T-cell (primary cell): ENCODE measurements at regions of chr1 and their contacts with region 1.

Region 1: GRCh38 chr1:89578151-89578550 is 53.5 kb downstream of the LRRC8B start:
- DNase-seq: no peak
- ATAC-seq: no peak
- H3K4me3 ChIP-seq: no peak overlapping the region
- H3K4me3 Mint-ChIP-seq: no peak overlapping the region
- H3K27ac ChIP-seq: no peak overlapping the region
- H3K27ac Mint-ChIP-seq: no peak overlapping the region
- H3K4me1 ChIP-seq: no peaks in the 10 kb centered on the region
- H3K4me1 Mint-ChIP-seq: peaks cover 11 to 18% (median 11%) of the 10 kb centered on the region in 3 donors
- H3K27me3 ChIP-seq: no peaks in the 10 kb centered on the region
- H3K27me3 Mint-ChIP-seq: no peaks in the 10 kb centered on the region

Region 2: DNA sequence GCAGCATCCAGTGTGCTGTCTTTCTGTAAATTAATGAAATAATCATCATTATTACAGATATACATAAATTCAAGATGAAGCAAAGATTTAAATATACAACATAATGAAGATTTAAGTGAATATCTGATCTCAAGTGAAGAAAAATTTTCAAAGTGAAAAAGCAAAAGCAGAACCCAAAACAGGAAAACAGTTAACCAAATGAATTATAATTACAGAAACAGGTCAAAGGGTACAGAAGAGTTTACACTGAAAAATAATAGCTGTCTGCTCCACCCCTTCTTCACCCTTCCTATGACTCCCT is 642.0 kb before region 1 on chr1:
- CTCF ChIA-PET with region 1: interaction called in 1 of 2 experiments, 10 read pairs
- POLR2A ChIA-PET with region 1: no interaction called
- DNase-seq: no peak
- ATAC-seq: no peak
- H3K4me3 ChIP-seq: no peak overlapping the region
- H3K4me3 Mint-ChIP-seq: no peak overlapping the region
- H3K27ac ChIP-seq: no peak overlapping the region
- H3K27ac Mint-ChIP-seq: peak overlapping the region; percentile 46
- H3K4me1 ChIP-seq: no peaks in the 10 kb centered on the region
- H3K4me1 Mint-ChIP-seq: peaks cover 0 to 6% (median 5%) of the 10 kb centered on the region in 3 donors
- H3K27me3 ChIP-seq: no peaks in the 10 kb centered on the region
- H3K27me3 Mint-ChIP-seq: no peaks in the 10 kb centered on the region

Region 3: GRCh38 chr1:88998716-88999115 is 579.4 kb before region 1 on chr1:
- CTCF ChIA-PET with region 1: no interaction called
- POLR2A ChIA-PET with region 1: interaction called in 1 of 2 experiments, 10 read pairs
- DNase-seq: peak in 3 of 35 experiments; percentile 26 to 86 (median 36)
- ATAC-seq: peak; percentile 75 to 87 (median 81)
- H3K4me3 ChIP-seq: no peak overlapping the region
- H3K4me3 Mint-ChIP-seq: no peak overlapping the region
- H3K27ac ChIP-seq: no peak overlapping the region
- H3K27ac Mint-ChIP-seq: no peak overlapping the region
- H3K4me1 ChIP-seq: peaks cover under 1 to 19% of the 10 kb centered on the region in 2 experiments
- H3K4me1 Mint-ChIP-seq: peaks cover 34 to 39% (median 38%) of the 10 kb centered on the region in 3 donors
- H3K27me3 ChIP-seq: no peaks in the 10 kb centered on the region
- H3K27me3 Mint-ChIP-seq: no peaks in the 10 kb centered on the region

Region 4: GRCh38 chr1:89261926-89262515 is 316.1 kb before region 1 on chr1:
- CTCF ChIA-PET with region 1: no interaction called
- POLR2A ChIA-PET with region 1: no interaction called
- DNase-seq: no peak
- ATAC-seq: no peak
- H3K4me3 ChIP-seq: no peak overlapping the region
- H3K4me3 Mint-ChIP-seq: peak overlapping the region in 2 of 3 donors; percentile 51 to 71
- H3K27ac ChIP-seq: peak overlapping the region; percentile 28
- H3K27ac Mint-ChIP-seq: peak overlapping the region; percentile 85 to 90
- H3K4me1 ChIP-seq: peaks cover 17 to 35% of the 10 kb centered on the region in 2 experiments
- H3K4me1 Mint-ChIP-seq: peaks cover 61 to 79% (median 78%) of the 10 kb centered on the region in 3 donors
- H3K27me3 ChIP-seq: no peaks in the 10 kb centered on the region
- H3K27me3 Mint-ChIP-seq: no peaks in the 10 kb centered on the region

Region 5: GRCh38 chr1:89516055-89516454 is 62.1 kb before region 1 on chr1:
- CTCF ChIA-PET with region 1: interaction called in 1 of 2 experiments, 21 read pairs
- POLR2A ChIA-PET with region 1: interaction called in 1 of 2 experiments, 3 read pairs
- DNase-seq: no peak
- ATAC-seq: no peak
- H3K4me3 ChIP-seq: no peak overlapping the region
- H3K4me3 Mint-ChIP-seq: no peak overlapping the region
- H3K27ac ChIP-seq: no peak overlapping the region
- H3K27ac Mint-ChIP-seq: no peak overlapping the region
- H3K4me1 ChIP-seq: no peaks in the 10 kb centered on the region
- H3K4me1 Mint-ChIP-seq: peaks cover 0 to 2% (median 0%) of the 10 kb centered on the region in 3 donors
- H3K27me3 ChIP-seq: no peaks in the 10 kb centered on the region
- H3K27me3 Mint-ChIP-seq: peaks cover 0 to 5% of the 10 kb centered on the region in 2 donors

Region 6: GRCh38 chr1:89530444-89531089 is 47.6 kb before region 1 on chr1:
- CTCF ChIA-PET with region 1: no interaction called
- POLR2A ChIA-PET with region 1: no interaction called
- DNase-seq: no peak
- ATAC-seq: no peak
- H3K4me3 ChIP-seq: no peak overlapping the region
- H3K4me3 Mint-ChIP-seq: no peak overlapping the region
- H3K27ac ChIP-seq: no peak overlapping the region
- H3K27ac Mint-ChIP-seq: no peak overlapping the region
- H3K4me1 ChIP-seq: peaks cover 13 to 21% of the 10 kb centered on the region in 2 experiments
- H3K4me1 Mint-ChIP-seq: peaks cover 43 to 58% (median 54%) of the 10 kb centered on the region in 3 donors
- H3K27me3 ChIP-seq: no peaks in the 10 kb centered on the region
- H3K27me3 Mint-ChIP-seq: no peaks in the 10 kb centered on the region

Region 7: DNA sequence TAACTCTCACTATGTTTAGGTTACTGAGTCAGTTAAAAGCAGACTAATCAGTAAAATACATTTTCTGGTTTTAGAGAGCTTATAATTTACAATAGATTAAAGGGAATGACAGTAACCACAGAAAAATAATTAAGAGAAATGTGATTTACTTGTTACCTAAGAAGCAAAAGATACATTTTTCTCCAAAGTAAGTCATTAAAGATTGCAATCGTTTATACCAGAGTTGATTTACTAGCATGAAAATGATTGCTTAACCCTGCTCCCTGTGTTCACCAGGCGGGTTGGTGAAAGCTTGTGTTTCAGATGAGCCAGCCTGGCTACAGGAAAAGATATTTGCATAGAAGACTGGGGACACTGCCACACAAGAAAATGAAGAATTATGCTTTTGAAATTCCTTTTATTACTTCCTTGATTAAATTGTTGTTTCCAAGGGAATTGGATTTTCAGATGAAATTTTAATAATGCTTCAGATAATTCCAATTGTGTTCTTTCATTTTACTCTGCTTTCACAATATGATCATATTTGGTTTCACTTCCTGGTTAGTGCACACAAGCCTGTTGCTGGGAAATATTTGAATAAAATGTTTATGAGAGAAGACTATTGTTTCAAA is 25.6 kb before region 1 on chr1:
- CTCF ChIA-PET with region 1: interaction called in 1 of 2 experiments, 4 read pairs
- POLR2A ChIA-PET with region 1: interaction called in 1 of 2 experiments, 15 read pairs
- DNase-seq: peak in 2 of 35 experiments; percentile 2 to 22
- ATAC-seq: peak in 1 of 4 experiments; percentile 61
- H3K4me3 ChIP-seq: peak overlapping the region in 1 of 2 donors; percentile 18
- H3K4me3 Mint-ChIP-seq: peak overlapping the region; percentile 17 to 47 (median 34)
- H3K27ac ChIP-seq: peak overlapping the region; percentile 2
- H3K27ac Mint-ChIP-seq: peak overlapping the region in 1 of 2 donors; percentile 69
- H3K4me1 ChIP-seq: peaks cover 3 to 13% of the 10 kb centered on the region in 2 experiments
- H3K4me1 Mint-ChIP-seq: peaks cover 54 to 72% (median 64%) of the 10 kb centered on the region in 3 donors
- H3K27me3 ChIP-seq: no peaks in the 10 kb centered on the region
- H3K27me3 Mint-ChIP-seq: no peaks in the 10 kb centered on the region

Region 8: DNA sequence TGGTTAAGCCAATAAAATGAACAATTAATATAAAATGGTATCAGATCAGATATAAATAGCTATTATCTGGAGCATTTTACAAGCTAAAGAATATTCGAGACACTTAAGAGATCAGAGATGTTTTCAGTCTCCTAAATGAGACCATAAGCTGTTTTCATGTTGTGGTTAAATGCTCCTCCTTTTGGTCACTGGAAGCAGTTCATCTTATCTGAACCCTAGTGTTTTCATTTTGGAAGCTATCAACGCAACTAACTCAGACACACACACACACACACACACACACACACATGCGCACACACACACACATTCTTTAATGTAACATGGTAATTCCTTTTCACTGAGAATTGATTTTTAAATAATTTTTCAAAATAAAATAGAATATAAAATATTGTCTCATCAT is 44.7 kb after region 1 on chr1:
- CTCF ChIA-PET with region 1: interaction called, 4 to 22 read pairs
- POLR2A ChIA-PET with region 1: interaction called, 3 read pairs
- DNase-seq: peak in 1 of 35 experiments; percentile 67
- ATAC-seq: peak; percentile 54 to 67 (median 64)
- H3K4me3 ChIP-seq: no peak overlapping the region
- H3K4me3 Mint-ChIP-seq: no peak overlapping the region
- H3K27ac ChIP-seq: no peak overlapping the region
- H3K27ac Mint-ChIP-seq: peak overlapping the region; percentile 72 to 75
- H3K4me1 ChIP-seq: peaks cover 2 to 7% of the 10 kb centered on the region in 2 experiments
- H3K4me1 Mint-ChIP-seq: peaks cover 57 to 66% (median 66%) of the 10 kb centered on the region in 3 donors
- H3K27me3 ChIP-seq: no peaks in the 10 kb centered on the region
- H3K27me3 Mint-ChIP-seq: no peaks in the 10 kb centered on the region